ENCODE measurements at regions of chr5 and their contacts with region 1.

Region 1: GRCh38 chr5:139517683-139518564 is 35.4 kb upstream of the STING1 start:
- DNase-seq: peak; percentile 95

Region 2: DNA sequence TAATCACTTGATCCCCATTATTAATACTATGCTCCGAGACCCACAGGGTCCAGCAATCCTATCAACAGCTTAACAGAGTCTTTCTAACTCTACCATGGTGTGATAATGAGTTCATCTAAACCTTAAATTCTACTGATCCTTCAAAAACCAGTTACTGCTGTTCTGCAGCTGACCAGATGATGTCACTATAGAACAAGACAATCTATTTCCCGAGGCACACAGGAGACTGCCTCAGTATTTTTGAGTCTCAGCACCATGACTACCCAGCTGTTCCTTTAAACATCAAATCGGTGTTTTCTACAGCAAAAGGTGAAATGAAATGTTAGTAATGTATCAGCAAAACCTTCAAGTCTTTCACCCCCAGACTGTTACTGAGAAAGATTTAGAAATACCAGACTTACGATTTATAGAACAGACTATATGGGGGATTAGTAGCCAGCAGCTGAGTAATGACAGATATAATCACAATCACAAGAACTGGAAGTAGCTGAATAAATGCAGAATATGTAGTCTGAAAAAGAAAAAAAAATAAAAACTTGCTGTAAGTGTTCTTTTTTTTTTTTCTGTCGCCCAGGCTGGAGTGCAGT is 95.5 kb before region 1 on chr5:
- CTCF ChIA-PET with region 1: interaction called, 71 read pairs
- POLR2A ChIA-PET with region 1: interaction called, 7 read pairs
- DNase-seq: peak; percentile 79